Cardiac septum (tissue), 1 donor: ENCODE measurements at regions of chr19 and their contacts with region 1.

Region 1: GRCh38 chr19:6273701-6274601 is 5.8 kb downstream of the MLLT1 start:
- DNase-seq: peak; percentile 94

Region 2: DNA sequence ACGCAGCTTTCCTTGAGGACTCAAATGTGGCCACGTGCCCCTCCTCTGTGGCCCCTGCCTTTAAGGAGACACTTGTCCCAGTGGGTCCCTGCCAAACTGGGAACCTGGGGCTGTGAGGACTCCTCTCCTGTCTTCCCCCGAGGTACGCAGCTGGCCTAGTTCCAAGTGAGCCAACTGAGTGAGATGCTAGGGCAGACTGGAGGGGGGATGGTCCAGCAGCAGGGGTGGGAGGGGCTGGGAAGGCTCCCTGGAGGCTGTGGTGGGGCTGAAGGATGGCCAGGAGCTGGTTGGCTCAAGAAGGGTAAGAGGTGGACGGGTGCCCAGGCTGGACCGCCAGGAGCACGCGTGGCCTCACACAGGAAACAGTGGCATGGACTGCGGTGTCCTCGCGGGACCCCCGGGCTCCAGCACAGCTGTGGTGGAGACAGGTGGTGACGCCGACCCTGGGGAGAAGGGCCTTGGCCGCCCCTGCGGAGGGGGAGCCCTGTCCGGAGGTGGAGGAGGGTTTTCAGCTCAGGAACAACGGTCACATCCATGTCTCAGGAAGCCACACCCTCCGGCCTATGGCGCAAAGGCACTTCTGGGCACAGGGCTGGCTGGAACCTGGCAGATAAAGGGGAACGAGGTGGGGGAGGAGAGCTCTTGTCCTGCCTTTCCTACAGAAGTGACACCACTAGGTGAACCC is 40.0 kb before region 1 on chr19:
- intact Hi-C with region 1: loop called (anchors 2 kb)
- DNase-seq: peak; percentile 90